ENCODE measurements at regions of chr14 and their contacts with region 1.

Region 1: GRCh38 chr14:61620130-61620946 is 75.0 kb upstream of the HIF1A start:
- DNase-seq: no peak
- ATAC-seq: no peak
- H3K4me3 Mint-ChIP-seq: no peak overlapping the region
- H3K27ac Mint-ChIP-seq: no peak overlapping the region
- H3K4me1 Mint-ChIP-seq: peaks cover 6% of the 10 kb centered on the region
- H3K27me3 Mint-ChIP-seq: no peaks in the 10 kb centered on the region
- CTCF ChIP-seq: no peak

Region 2: DNA sequence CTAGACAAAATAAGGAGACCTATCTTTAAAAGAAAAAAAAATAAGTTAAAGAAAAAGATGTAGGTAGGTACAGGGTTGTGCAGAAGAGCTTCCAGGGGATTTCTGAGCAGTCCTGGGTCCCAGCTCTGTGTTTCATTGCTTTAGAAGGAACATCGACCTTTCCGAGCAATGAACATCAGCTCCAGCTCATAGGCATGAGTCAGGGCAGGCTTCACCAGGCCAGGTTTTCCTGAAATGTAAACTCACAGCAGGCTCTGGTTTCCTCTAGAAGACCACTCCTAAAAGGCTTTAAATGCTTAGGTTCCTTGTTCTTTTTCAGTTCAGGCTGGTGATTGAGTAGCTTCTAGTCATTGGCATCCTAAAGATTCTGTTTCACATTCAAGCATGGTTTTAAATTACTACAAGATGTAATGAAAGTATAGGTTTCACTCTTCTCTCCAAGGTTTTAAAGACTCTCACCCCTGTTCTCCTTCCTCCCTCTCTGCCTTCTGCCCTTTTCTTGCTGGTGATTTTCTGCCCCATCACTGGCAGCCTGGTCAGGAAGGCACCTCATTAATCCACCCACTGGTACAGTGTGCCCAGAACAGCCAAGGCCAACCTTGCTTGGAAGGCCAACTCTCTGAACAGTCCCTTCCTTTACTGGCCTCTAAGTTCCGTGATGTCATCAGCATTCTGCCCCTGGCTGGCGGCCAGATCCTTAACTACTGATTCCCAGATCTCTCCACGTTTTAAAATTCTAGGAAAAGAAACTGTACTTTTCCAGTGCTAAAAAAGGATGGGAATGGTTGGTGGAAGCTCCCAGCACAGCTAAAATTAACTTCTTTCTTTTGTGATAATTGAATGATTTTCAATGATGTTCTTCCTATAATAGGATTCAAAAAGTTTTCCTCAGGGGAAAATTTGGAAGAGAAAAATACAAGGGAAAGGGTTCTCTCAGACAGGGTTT is 34.5 kb before region 1 on chr14:
- CTCF ChIA-PET with region 1: no interaction called
- POLR2A ChIA-PET with region 1: no interaction called
- intact Hi-C with region 1: loop called (anchors 5 kb)
- DNase-seq: no peak
- ATAC-seq: no peak
- H3K4me3 Mint-ChIP-seq: no peak overlapping the region
- H3K27ac Mint-ChIP-seq: no peak overlapping the region
- H3K4me1 Mint-ChIP-seq: peaks cover 27% of the 10 kb centered on the region
- H3K27me3 Mint-ChIP-seq: no peaks in the 10 kb centered on the region
- CTCF ChIP-seq: no peak

Region 3: GRCh38 chr14:63266106-63266505 is 1645.8 kb after region 1 on chr14:
- CTCF ChIA-PET with region 1: no interaction called
- POLR2A ChIA-PET with region 1: no interaction called
- intact Hi-C with region 1: no loop called
- DNase-seq: no peak
- ATAC-seq: no peak
- H3K4me3 Mint-ChIP-seq: no peak overlapping the region
- H3K27ac Mint-ChIP-seq: no peak overlapping the region
- H3K4me1 Mint-ChIP-seq: no peaks in the 10 kb centered on the region
- H3K27me3 Mint-ChIP-seq: peaks cover 26% of the 10 kb centered on the region
- CTCF ChIP-seq: no peak